Ascending aorta (tissue), 2 donors: ENCODE measurements at regions of chr9 and their contacts with region 1.

Region 1: DNA sequence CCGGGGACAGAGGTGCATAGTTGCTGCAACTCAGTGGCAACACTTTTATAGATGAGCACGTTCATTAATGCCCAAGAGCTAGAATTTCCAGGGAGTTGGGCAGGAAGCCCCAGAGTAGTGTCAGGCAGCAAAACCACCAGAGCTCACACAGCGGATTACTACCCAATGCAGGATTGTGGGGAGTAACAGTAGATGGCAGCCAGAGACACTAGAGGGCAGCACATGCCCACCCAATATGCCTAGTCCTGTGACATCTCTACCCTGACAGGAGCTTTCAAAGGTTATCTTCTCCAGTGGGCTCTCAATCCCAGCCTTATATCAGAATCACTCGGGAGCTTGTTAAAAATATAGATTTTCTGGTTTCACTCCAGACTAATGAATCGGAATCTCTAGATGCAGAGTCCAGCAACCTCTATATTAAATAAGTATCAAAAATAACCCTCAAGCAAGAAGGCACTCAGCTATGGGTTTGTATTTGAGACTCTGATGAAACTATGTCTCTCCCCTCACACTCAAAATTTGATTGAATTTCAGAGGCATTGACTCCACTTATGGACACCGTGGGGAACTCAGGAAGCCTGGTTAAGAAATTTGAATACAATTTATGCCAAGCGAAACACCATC is 58.4 kb upstream of the PHF24 start:
- DNase-seq: peak in 1 of 2 donors; percentile 83
- H3K4me3 ChIP-seq: no peak overlapping the region
- H3K27ac ChIP-seq: no peak overlapping the region
- H3K4me1 ChIP-seq: no peaks in the 10 kb centered on the region
- H3K27me3 ChIP-seq: no peaks in the 10 kb centered on the region
- CTCF ChIP-seq: peak; percentile 76 to 84 (median 79)

Region 2: GRCh38 chr9:34989003-34989945 is 89.6 kb after region 1 on chr9 and contains the start of gene DNAJB5:
- intact Hi-C with region 1: loop called (anchors 1 kb)
- DNase-seq: peak; percentile 99 to 100
- H3K4me3 ChIP-seq: peak within 1 kb of the TSS; percentile 81 to 100
- H3K27ac ChIP-seq: peak within 1 kb of the TSS; percentile 98 to 100
- H3K4me1 ChIP-seq: peaks cover 13 to 39% of the 10 kb centered on the region in 2 donors
- H3K27me3 ChIP-seq: no peaks in the 10 kb centered on the region
- CTCF ChIP-seq: no peak
- total RNA-seq, gene DNAJB5: 40.8 TPM

Region 3: DNA sequence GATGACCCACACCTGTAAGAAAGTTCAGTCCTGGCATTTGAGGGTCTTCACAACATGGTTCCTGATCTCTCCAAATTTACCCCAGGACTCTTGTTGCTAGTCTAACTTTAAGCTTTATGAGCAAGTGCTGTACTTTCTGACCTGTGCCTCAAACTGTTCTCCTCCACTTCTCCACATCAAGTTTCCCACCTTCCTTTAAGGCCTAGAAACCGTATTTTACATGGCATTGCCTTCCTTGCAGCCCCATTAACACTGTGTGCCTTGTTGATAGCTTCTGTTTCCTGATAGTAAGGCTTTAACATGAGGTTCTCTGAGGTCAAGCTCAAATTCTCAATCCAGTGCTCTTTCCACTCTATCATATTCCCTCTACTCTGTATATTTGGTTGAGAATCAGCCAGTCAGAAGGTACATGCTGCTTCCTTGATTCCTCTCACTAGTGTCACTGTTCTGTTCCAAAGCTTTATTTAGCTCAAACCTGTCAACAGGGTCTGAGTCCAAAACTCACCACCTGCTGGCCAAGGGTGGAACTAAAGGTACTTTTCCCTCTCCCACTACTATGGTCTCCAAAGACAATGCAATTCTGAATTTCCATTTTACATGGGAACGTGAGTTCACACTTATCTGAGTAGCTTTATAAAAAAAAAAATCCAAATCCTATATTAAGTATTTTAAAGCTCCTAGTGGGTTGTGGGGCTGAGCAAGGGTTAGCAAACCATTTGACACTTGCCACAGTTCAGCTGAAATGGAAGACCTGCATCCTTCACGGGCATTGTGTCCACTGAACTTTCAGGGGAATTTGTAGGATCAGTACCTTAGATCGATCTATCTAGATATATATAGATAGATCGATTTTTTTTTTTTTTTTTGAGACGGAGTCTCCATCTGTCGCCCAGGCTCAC is 151.7 kb after region 1 on chr9:
- intact Hi-C with region 1: loop called (anchors 1 kb)
- DNase-seq: no peak
- H3K4me3 ChIP-seq: no peak overlapping the region
- H3K27ac ChIP-seq: no peak overlapping the region
- H3K4me1 ChIP-seq: no peaks in the 10 kb centered on the region
- H3K27me3 ChIP-seq: no peaks in the 10 kb centered on the region
- CTCF ChIP-seq: peak in 2 of 3 experiments; percentile 43 to 58

Region 4: GRCh38 chr9:35096035-35096849 is 196.6 kb after region 1 on chr9 and contains the start of gene PIGO:
- intact Hi-C with region 1: loop called (anchors 1 kb)
- DNase-seq: peak in 1 of 2 donors; percentile 94
- H3K4me3 ChIP-seq: peak within 1 kb of the TSS; percentile 82 to 87
- H3K27ac ChIP-seq: peak within 1 kb of the TSS; percentile 96 to 99
- H3K4me1 ChIP-seq: peaks cover 0 to 10% of the 10 kb centered on the region in 2 donors
- H3K27me3 ChIP-seq: no peaks in the 10 kb centered on the region
- CTCF ChIP-seq: peak; percentile 71 to 79 (median 76)
- total RNA-seq, gene PIGO: 2.4 TPM

Region 5: DNA sequence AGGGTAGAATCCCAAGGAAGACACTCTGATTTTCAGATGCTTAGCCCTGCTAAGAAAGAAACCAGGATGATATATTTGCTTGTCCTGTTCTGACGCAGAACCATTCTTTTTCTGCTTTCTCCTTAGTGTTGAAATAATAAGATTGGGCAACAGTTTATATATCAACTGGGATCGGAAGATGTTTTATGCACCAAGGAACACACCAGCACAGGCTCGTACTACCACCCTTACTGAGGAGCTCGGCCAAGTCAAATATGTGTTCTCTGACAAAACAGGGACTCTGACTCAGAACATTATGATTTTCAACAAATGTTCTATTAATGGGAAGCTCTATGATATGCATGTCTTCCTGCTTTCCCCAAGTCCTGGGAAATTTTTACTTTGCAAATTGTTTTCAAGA is 571.2 kb after region 1 on chr9:
- intact Hi-C with region 1: loop called (anchors 10 kb)
- DNase-seq: peak in 1 of 2 donors; percentile 87
- H3K4me3 ChIP-seq: peak overlapping the region; percentile 1 to 18
- H3K27ac ChIP-seq: peak overlapping the region; percentile 77 to 81
- H3K4me1 ChIP-seq: peaks cover 2 to 12% of the 10 kb centered on the region in 2 donors
- H3K27me3 ChIP-seq: no peaks in the 10 kb centered on the region
- CTCF ChIP-seq: no peak